ENCODE measurements at regions of chr9 and their contacts with region 1.

Region 1: DNA sequence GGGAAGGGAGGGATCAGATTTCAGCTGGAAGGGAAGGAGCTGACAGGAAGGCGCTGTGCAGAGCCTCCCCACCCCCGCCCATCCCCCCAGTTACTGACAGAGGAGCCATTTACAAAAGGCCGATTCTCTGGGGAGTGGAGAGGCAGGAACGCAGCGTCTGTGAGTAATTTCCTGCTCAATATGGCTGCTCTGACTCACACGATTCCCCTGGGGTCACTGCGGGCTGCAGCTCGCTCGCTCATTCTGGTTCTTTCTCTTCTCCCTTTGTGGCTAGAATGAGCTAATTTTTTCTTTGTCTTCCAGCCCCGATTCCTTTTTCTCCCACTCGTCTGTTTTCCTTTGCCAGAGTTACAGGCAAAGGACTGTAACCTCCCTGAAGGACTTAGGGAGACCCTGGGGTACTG is 28.8 kb downstream of the PTPA start:
- DNase-seq: peak; percentile 92
- ATAC-seq: peak; percentile 91
- H3K4me3 Mint-ChIP-seq: peak overlapping the region; percentile 80
- H3K27ac Mint-ChIP-seq: peak overlapping the region; percentile 93
- H3K4me1 Mint-ChIP-seq: peaks cover 42% of the 10 kb centered on the region
- H3K27me3 Mint-ChIP-seq: no peaks in the 10 kb centered on the region
- CTCF ChIP-seq: no peak

Region 2: GRCh38 chr9:129068990-129069861 is 70.8 kb before region 1 on chr9:
- CTCF ChIA-PET with region 1: no interaction called
- POLR2A ChIA-PET with region 1: no interaction called
- intact Hi-C with region 1: no loop called
- DNase-seq: peak; percentile 87
- ATAC-seq: peak; percentile 92
- H3K4me3 Mint-ChIP-seq: peak overlapping the region; percentile 62
- H3K27ac Mint-ChIP-seq: peak overlapping the region; percentile 85
- H3K4me1 Mint-ChIP-seq: peaks cover 43% of the 10 kb centered on the region
- H3K27me3 Mint-ChIP-seq: no peaks in the 10 kb centered on the region
- CTCF ChIP-seq: no peak

Region 3: DNA sequence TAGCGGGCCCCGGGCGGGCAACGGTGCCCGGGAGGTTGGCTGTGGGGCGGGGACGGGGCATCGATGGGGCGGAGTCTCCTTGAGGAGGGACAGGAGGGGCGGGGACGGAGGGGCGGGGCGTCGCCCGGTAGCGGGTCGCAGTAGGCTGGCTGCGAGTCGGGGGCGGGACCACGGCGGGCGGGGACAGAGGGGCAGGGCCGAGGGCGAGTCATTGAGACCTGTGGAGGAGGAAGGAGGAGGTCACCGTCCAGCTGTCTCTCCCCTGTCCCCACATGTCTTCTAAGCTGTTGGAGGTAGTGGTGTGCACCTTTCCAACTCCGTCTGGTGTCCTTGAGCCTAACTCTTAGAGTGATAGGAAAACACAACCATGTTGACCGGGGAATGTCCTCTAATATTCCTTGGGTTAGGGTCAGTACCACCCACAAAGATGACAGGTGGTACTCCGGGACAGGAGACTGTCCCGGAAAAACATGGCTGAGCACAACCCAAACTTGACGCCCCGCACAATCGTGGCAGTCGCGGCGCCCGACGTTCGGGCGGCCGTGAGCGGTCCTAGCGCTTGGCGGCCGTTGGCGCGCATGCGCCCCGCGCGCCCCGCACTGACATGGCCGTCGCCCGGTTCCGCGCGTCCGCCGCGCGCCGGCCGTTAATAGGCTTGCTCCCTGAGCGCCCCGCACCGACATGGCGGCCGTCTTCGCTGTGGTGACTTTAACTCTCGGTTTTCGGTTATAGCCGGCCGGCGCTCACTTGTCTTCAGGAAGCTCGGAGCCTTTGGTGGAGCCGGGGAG is 29.1 kb before region 1 on chr9 and contains the starts of genes CRAT and PTPA:
- CTCF ChIA-PET with region 1: interaction called, 11 read pairs
- POLR2A ChIA-PET with region 1: interaction called, 6 read pairs
- intact Hi-C with region 1: no loop called
- DNase-seq: peak; percentile 98
- ATAC-seq: peak; percentile 91
- H3K4me3 Mint-ChIP-seq: peak within 1 kb of the TSS; percentile 87
- H3K27ac Mint-ChIP-seq: peak within 1 kb of the TSS; percentile 96
- H3K4me1 Mint-ChIP-seq: peaks cover 29% of the 10 kb centered on the region
- H3K27me3 Mint-ChIP-seq: no peaks in the 10 kb centered on the region
- CTCF ChIP-seq: no peak
- total RNA-seq, gene CRAT: 11.8 to 12.7 TPM
- total RNA-seq, gene PTPA: 95.3 to 98.5 TPM

Region 4: GRCh38 chr9:129154866-129155477 is 15.0 kb after region 1 on chr9:
- CTCF ChIA-PET with region 1: interaction called, 28 read pairs
- POLR2A ChIA-PET with region 1: interaction called, 5 read pairs
- intact Hi-C with region 1: no loop called
- DNase-seq: no peak
- ATAC-seq: no peak
- H3K4me3 Mint-ChIP-seq: no peak overlapping the region
- H3K27ac Mint-ChIP-seq: no peak overlapping the region
- H3K4me1 Mint-ChIP-seq: no peaks in the 10 kb centered on the region
- H3K27me3 Mint-ChIP-seq: no peaks in the 10 kb centered on the region
- CTCF ChIP-seq: no peak

Region 5: GRCh38 chr9:129166623-129167557 is 26.9 kb after region 1 on chr9:
- CTCF ChIA-PET with region 1: interaction called, 65 read pairs
- POLR2A ChIA-PET with region 1: interaction called, 3 read pairs
- intact Hi-C with region 1: no loop called
- DNase-seq: peak; percentile 20
- ATAC-seq: peak; percentile 40
- H3K4me3 Mint-ChIP-seq: peak overlapping the region; percentile 51
- H3K27ac Mint-ChIP-seq: peak overlapping the region; percentile 20
- H3K4me1 Mint-ChIP-seq: peaks cover 20% of the 10 kb centered on the region
- H3K27me3 Mint-ChIP-seq: no peaks in the 10 kb centered on the region
- CTCF ChIP-seq: no peak

Region 6: GRCh38 chr9:129320575-129321263 is 180.7 kb after region 1 on chr9:
- CTCF ChIA-PET with region 1: interaction called, 26 read pairs
- POLR2A ChIA-PET with region 1: no interaction called
- intact Hi-C with region 1: no loop called
- DNase-seq: peak; percentile 75
- ATAC-seq: peak; percentile 89
- H3K4me3 Mint-ChIP-seq: peak overlapping the region; percentile 72
- H3K27ac Mint-ChIP-seq: peak overlapping the region; percentile 85
- H3K4me1 Mint-ChIP-seq: peaks cover 26% of the 10 kb centered on the region
- H3K27me3 Mint-ChIP-seq: no peaks in the 10 kb centered on the region
- CTCF ChIP-seq: no peak

Region 7: GRCh38 chr9:129610473-129611301 is 470.7 kb after region 1 on chr9:
- CTCF ChIA-PET with region 1: interaction called, 31 read pairs
- POLR2A ChIA-PET with region 1: interaction called, 5 read pairs
- intact Hi-C with region 1: loop called (anchors 5 kb)
- DNase-seq: peak; percentile 78
- ATAC-seq: peak; percentile 66
- H3K4me3 Mint-ChIP-seq: peak overlapping the region; percentile 62
- H3K27ac Mint-ChIP-seq: peak overlapping the region; percentile 59
- H3K4me1 Mint-ChIP-seq: peaks cover 32% of the 10 kb centered on the region
- H3K27me3 Mint-ChIP-seq: no peaks in the 10 kb centered on the region
- CTCF ChIP-seq: peak; percentile 99